Common myeloid progenitor, CD34-positive (primary cell): ENCODE measurements at regions of chr15 and their contacts with region 1.

Region 1: GRCh38 chr15:75042730-75043508 is 19.5 kb downstream of the PPCDC start:
- DNase-seq: peak; percentile 98 to 100 (median 99)
- H3K4me3 ChIP-seq: peak overlapping the region in 5 of 7 experiments; percentile 6 to 50 (median 39)
- H3K27ac ChIP-seq: peak overlapping the region; percentile 90
- H3K4me1 ChIP-seq: peaks cover 16 to 98% (median 94%) of the 10 kb centered on the region in 4 experiments
- H3K27me3 ChIP-seq: no peaks in the 10 kb centered on the region

Region 2: GRCh38 chr15:74723754-74724334 is 319.1 kb before region 1 on chr15:
- CTCF ChIA-PET with region 1: no interaction called
- POLR2A ChIA-PET with region 1: no interaction called
- DNase-seq: peak; percentile 50 to 76 (median 74)
- H3K4me3 ChIP-seq: no peak overlapping the region
- H3K27ac ChIP-seq: no peak overlapping the region
- H3K4me1 ChIP-seq: peaks cover 0 to 22% (median 16%) of the 10 kb centered on the region in 4 experiments
- H3K27me3 ChIP-seq: peaks cover 2 to 35% (median 10%) of the 10 kb centered on the region in 5 experiments

Region 3: DNA sequence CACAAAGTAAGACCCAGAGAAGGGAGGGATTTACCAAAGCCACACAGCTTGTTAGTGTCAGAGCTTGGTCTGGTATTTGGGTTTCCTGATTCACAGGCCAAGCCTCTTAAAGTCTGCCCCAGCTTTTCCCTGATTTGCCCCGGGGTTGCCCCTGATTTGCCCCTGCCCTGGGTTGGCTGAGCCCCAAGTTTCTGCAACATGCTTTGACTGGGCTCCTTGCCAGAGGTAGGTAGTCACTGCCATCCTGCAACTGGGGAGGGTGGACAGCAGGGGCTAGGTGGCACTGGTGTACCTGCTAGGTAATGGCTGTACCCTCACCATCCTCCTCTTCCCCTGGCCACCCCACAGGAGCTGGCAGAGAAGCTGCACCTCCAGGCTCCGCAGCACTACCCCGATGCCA is 150.6 kb before region 1 on chr15:
- CTCF ChIA-PET with region 1: no interaction called
- POLR2A ChIA-PET with region 1: no interaction called
- DNase-seq: no peak
- H3K4me3 ChIP-seq: no peak overlapping the region
- H3K27ac ChIP-seq: no peak overlapping the region
- H3K4me1 ChIP-seq: peaks cover 0 to 31% (median 27%) of the 10 kb centered on the region in 4 experiments
- H3K27me3 ChIP-seq: no peaks in the 10 kb centered on the region

Region 4: DNA sequence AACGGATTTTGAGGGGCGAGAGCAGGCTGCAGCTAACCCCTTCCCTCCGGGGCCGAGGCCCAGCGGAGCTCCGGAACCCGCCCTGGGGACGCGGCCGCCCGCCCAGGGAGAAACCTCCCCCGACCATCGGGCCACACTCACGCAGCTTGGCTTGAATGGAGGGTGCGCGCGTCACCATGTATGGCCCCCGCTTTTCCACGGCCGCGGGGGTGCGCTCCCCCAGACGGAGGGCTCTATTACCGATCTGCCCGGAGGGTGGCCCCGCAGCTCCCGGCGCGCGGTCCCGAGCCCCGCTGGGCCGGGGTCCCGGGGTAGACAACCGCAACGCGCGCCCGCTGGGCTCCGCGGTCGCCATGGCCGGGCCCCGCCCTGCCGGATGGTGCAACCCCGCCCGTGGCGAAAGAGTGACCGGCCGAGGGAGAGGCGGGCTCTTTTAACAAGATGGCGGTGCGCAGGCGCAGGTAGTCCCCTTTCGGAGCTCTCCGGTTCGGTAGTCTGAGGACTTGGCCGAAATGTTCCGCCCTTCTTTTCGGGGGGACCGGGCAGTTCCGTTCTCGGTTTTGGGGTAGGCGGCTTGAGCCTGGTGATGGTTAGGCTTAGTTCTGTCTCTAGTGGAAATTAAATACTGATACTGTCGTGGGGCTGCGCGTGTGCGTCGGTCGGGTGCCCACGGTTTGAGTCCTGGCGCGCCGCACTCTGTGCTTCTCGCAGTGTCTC is 136.3 kb before region 1 on chr15 and contains the start of gene FAM219B:
- CTCF ChIA-PET with region 1: no interaction called
- POLR2A ChIA-PET with region 1: no interaction called
- DNase-seq: peak; percentile 65 to 83 (median 83)
- H3K4me3 ChIP-seq: peak within 1 kb of the TSS; percentile 83 to 92 (median 89)
- H3K27ac ChIP-seq: peak within 1 kb of the TSS; percentile 72 to 88
- H3K4me1 ChIP-seq: peaks cover 16 to 50% (median 40%) of the 10 kb centered on the region in 4 experiments
- H3K27me3 ChIP-seq: no peaks in the 10 kb centered on the region

Region 5: GRCh38 chr15:75029378-75030022 is 13.4 kb before region 1 on chr15:
- CTCF ChIA-PET with region 1: interaction called, 22 read pairs
- POLR2A ChIA-PET with region 1: interaction called, 32 read pairs
- DNase-seq: peak; percentile 92 to 97 (median 96)
- H3K4me3 ChIP-seq: peak overlapping the region in 4 of 7 experiments; percentile 46 to 62 (median 54)
- H3K27ac ChIP-seq: peak overlapping the region; percentile 72 to 73
- H3K4me1 ChIP-seq: peaks cover 0 to 94% (median 84%) of the 10 kb centered on the region in 4 experiments
- H3K27me3 ChIP-seq: no peaks in the 10 kb centered on the region

Region 6: DNA sequence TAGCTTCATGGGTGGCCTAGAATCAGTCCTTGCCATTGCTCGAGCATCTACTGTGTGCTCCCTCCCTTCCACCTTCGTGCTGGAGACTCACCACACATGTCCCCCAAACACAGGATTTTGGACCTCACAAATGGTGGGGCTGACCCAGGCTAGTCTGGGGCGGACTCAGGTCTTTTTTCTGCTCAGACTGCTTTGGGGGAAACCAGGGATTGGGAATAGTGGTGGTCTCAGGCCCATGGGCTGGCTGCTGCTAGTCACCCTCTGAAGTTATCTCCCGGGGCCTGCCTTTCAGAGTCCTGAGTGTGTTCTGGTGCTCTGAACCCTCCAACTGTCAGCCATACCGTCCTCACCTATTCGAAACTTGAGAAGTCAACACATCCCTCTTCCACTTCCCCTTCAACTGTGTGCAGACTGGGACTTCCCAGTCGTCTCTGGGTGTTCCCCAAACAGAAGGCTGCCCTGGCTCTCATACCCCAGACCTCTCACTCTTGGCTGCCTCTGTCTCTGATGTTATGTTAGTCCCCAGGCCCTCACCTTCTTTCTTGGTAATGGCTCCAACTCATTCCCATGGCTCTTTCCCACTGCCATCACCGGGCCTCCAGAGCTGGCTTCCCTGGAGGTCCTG is 26.5 kb after region 1 on chr15:
- CTCF ChIA-PET with region 1: interaction called, 32 read pairs
- POLR2A ChIA-PET with region 1: interaction called, 8 read pairs
- DNase-seq: peak; percentile 46 to 80 (median 79)
- H3K4me3 ChIP-seq: no peak overlapping the region
- H3K27ac ChIP-seq: no peak overlapping the region
- H3K4me1 ChIP-seq: peaks cover 12 to 76% (median 36%) of the 10 kb centered on the region in 4 experiments
- H3K27me3 ChIP-seq: no peaks in the 10 kb centered on the region

Region 7: GRCh38 chr15:75104804-75105535 is 62.1 kb after region 1 on chr15:
- CTCF ChIA-PET with region 1: interaction called, 95 read pairs
- POLR2A ChIA-PET with region 1: interaction called, 57 read pairs
- DNase-seq: peak; percentile 84 to 95 (median 95)
- H3K4me3 ChIP-seq: peak overlapping the region in 3 of 7 experiments; percentile 5 to 28 (median 22)
- H3K27ac ChIP-seq: peak overlapping the region; percentile 38 to 55
- H3K4me1 ChIP-seq: peaks cover 21 to 56% (median 43%) of the 10 kb centered on the region in 4 experiments
- H3K27me3 ChIP-seq: no peaks in the 10 kb centered on the region

Region 8: GRCh38 chr15:75123395-75123794 is 80.5 kb after region 1 on chr15:
- CTCF ChIA-PET with region 1: interaction called, 11 read pairs
- POLR2A ChIA-PET with region 1: interaction called, 17 read pairs
- DNase-seq: peak; percentile 46 to 86 (median 86)
- H3K4me3 ChIP-seq: peak overlapping the region in 1 of 7 experiments; percentile 13
- H3K27ac ChIP-seq: peak overlapping the region in 1 of 2 experiments; percentile 85
- H3K4me1 ChIP-seq: peaks cover 12 to 46% (median 30%) of the 10 kb centered on the region in 4 experiments
- H3K27me3 ChIP-seq: no peaks in the 10 kb centered on the region

Region 9: GRCh38 chr15:75178171-75179075 is 135.5 kb after region 1 on chr15:
- CTCF ChIA-PET with region 1: interaction called, 7 read pairs
- POLR2A ChIA-PET with region 1: interaction called, 15 read pairs
- DNase-seq: peak in 2 of 3 donors; percentile 60 to 69
- H3K4me3 ChIP-seq: peak overlapping the region in 5 of 7 experiments; percentile 43 to 70 (median 60)
- H3K27ac ChIP-seq: peak overlapping the region; percentile 58 to 84
- H3K4me1 ChIP-seq: peaks cover 18 to 92% (median 80%) of the 10 kb centered on the region in 4 experiments
- H3K27me3 ChIP-seq: no peaks in the 10 kb centered on the region

Region 10: DNA sequence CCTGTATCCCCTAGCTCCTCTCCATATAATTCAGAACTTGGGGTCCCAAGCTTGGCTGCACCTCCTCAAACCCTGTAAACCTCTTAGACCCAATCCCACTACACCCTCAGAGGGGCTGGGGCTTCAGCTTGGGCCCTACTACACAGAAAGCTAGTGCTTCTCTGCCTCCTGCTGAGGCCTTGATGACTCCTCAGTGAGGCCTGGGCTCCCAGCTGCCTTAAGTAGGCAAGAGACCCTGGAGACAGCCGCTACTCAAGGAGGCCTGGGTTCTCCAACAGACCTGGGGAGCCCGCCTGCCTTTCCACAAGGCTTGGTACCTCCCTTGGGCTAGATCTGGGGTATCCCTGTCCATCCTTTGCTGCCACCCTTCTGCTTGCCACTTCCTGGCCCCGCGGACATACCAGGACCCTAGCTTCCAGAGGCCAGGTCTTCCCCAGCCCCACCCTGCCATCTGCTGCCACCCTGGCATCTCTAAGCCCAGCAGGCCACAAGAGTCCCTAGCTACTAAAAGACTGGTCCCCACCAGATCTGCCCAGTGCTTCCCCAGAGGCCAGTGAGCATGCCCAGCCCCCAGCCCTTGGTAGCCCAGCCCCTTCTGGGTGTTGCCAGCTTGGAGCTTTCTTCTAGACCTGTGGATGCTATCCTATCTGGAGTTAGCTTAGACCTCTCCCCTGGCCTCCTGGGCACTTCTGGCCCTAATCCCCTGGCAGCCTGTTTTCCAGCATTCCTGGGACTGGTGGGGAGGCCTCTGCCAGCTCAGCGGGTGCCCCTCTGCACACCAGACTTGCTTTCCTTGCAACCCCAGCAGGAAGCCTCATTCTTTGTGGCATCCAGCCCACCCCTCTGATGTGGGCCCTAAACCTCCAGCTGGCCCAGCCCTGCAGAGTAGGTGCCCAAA is 172.4 kb after region 1 on chr15:
- CTCF ChIA-PET with region 1: interaction called, 191 read pairs
- POLR2A ChIA-PET with region 1: interaction called, 3 read pairs
- DNase-seq: no peak
- H3K4me3 ChIP-seq: no peak overlapping the region
- H3K27ac ChIP-seq: peak overlapping the region in 1 of 2 experiments; percentile 55
- H3K4me1 ChIP-seq: peaks cover 0 to 35% (median 27%) of the 10 kb centered on the region in 4 experiments
- H3K27me3 ChIP-seq: no peaks in the 10 kb centered on the region